ENCODE measurements at regions of chr17 and their contacts with region 1.

Region 1: GRCh38 chr17:34637548-34638525 is 58.5 kb downstream of the TMEM132E start:
- H3K4me3 ChIP-seq: no peak overlapping the region
- H3K27ac ChIP-seq: no peak overlapping the region
- H3K4me1 ChIP-seq: no peaks in the 10 kb centered on the region
- CTCF ChIP-seq: peak; percentile 80

Region 2: GRCh38 chr17:34579017-34579946 is 58.6 kb before region 1 on chr17 and contains the start of gene TMEM132E:
- CTCF ChIA-PET with region 1: interaction called, 35 read pairs
- POLR2A ChIA-PET with region 1: no interaction called
- H3K4me3 ChIP-seq: peak within 1 kb of the TSS; percentile 57
- H3K27ac ChIP-seq: peak within 1 kb of the TSS; percentile 80; the same call in 1 of the 2 replicates
- H3K4me1 ChIP-seq: peaks cover 18% of the 10 kb centered on the region
- CTCF ChIP-seq: peak; percentile 76

Region 3: GRCh38 chr17:34584805-34585416 is 52.9 kb before region 1 on chr17:
- CTCF ChIA-PET with region 1: interaction called, 35 read pairs
- POLR2A ChIA-PET with region 1: no interaction called
- H3K4me3 ChIP-seq: no peak overlapping the region
- H3K27ac ChIP-seq: no peak overlapping the region
- H3K4me1 ChIP-seq: peaks cover 7% of the 10 kb centered on the region
- CTCF ChIP-seq: no peak

Region 4: GRCh38 chr17:34613064-34614019 is 24.5 kb before region 1 on chr17:
- CTCF ChIA-PET with region 1: interaction called, 11 read pairs
- POLR2A ChIA-PET with region 1: interaction called, 3 read pairs
- H3K4me3 ChIP-seq: no peak overlapping the region
- H3K27ac ChIP-seq: peak overlapping the region; percentile 73
- H3K4me1 ChIP-seq: peaks cover 52% of the 10 kb centered on the region
- CTCF ChIP-seq: no peak

Region 5: DNA sequence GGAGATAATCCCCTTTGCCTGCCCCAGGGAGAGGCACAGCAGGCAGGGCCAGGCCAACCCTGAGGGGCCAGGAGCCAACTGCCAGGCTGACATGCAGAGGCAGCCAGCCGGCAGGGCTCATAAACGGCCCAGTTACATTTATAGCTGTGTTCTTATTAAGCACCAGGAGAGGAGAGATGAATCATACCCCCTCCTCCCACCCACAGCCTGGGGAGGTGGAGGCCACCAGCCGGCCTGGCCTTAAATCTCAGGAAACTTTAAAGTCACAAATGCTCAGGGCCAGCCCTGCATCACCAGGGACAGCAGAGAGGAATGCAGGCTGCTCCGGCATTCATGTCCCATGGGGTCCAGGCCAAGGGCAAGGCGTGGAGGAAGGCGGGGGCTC is 118.8 kb after region 1 on chr17:
- CTCF ChIA-PET with region 1: no interaction called
- POLR2A ChIA-PET with region 1: no interaction called
- H3K4me3 ChIP-seq: no peak overlapping the region
- H3K27ac ChIP-seq: no peak overlapping the region
- H3K4me1 ChIP-seq: no peaks in the 10 kb centered on the region
- CTCF ChIP-seq: no peak

Measured in HEK293 (cell line).